Activated T-helper 1 cell treated with anti-CD3 and anti-CD28 coated beads, Interleukin-12 subunit alpha, Interleukin-12 subunit beta, Interleukin-2, Interleukin-4 antibody, amounts not matched to agents 30 ng/mL and 10 ng/mL and 1 ng/mL, durations not matched to agents 14 hours and 24 hours and 36 hours (primary cell): ENCODE measurements at regions of chr12 and their contacts with region 1.

Region 1: DNA sequence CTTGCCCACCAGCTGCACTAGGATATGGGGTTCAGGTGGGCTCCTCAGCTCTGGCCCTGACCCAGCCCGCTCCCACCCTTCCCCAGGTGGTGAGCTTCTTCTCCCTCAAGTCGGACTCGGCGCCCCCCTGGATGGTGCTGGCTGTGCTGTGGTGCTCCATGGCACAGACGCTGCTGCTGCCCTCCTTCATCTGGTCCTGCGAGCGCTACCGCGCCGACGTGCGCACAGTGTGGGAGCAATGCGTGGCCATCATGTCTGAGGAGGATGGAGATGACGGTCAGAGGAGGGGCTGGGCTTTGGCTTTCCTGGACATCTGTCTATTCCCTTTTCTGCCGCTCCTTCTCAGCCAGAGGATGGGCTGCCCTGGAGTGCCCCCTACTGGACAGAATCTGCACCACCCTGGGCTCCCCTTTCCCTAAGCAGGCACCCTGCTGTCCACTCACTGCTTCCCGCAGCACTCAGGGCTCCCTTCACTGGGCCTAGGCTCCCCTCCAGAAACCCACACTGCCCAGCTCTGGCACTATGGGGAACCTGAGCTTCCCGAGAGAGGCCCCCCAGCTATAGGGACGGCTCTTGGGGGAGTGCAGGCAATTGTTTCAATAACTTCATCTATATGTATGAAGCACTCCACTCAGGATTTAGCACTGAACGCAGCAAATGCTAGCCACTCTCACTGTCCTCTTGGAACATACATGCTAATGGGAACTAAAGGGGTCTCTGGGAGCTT is 2.6 kb upstream of the P3H3 start:
- DNase-seq: peak; percentile 72
- H3K4me3 Mint-ChIP-seq: peak overlapping the region; percentile 40
- H3K27ac Mint-ChIP-seq: peak overlapping the region; percentile 59
- H3K4me1 Mint-ChIP-seq: peaks cover 46% of the 10 kb centered on the region
- H3K27me3 Mint-ChIP-seq: peaks cover 46% of the 10 kb centered on the region

Region 2: GRCh38 chr12:6613776-6614512 is 211.6 kb before region 1 on chr12:
- intact Hi-C with region 1: loop called (anchors 1 kb)
- DNase-seq: no peak
- H3K4me3 Mint-ChIP-seq: no peak overlapping the region
- H3K27ac Mint-ChIP-seq: peak overlapping the region; percentile 50
- H3K4me1 Mint-ChIP-seq: peaks cover 33% of the 10 kb centered on the region
- H3K27me3 Mint-ChIP-seq: no peaks in the 10 kb centered on the region

Region 3: GRCh38 chr12:6735448-6736191 is 89.9 kb before region 1 on chr12:
- intact Hi-C with region 1: loop called (anchors 1 kb)
- DNase-seq: peak; percentile 20
- H3K4me3 Mint-ChIP-seq: no peak overlapping the region
- H3K27ac Mint-ChIP-seq: no peak overlapping the region
- H3K4me1 Mint-ChIP-seq: peaks cover 5% of the 10 kb centered on the region
- H3K27me3 Mint-ChIP-seq: no peaks in the 10 kb centered on the region

Region 4: GRCh38 chr12:6771091-6771495 is 54.5 kb before region 1 on chr12:
- intact Hi-C with region 1: loop called (anchors 5 kb)
- DNase-seq: no peak
- H3K4me3 Mint-ChIP-seq: peak overlapping the region; percentile 82
- H3K27ac Mint-ChIP-seq: peak overlapping the region; percentile 86
- H3K4me1 Mint-ChIP-seq: peaks cover 77% of the 10 kb centered on the region
- H3K27me3 Mint-ChIP-seq: no peaks in the 10 kb centered on the region